ENCODE measurements at regions of chr3 and their contacts with region 1.

Region 1: DNA sequence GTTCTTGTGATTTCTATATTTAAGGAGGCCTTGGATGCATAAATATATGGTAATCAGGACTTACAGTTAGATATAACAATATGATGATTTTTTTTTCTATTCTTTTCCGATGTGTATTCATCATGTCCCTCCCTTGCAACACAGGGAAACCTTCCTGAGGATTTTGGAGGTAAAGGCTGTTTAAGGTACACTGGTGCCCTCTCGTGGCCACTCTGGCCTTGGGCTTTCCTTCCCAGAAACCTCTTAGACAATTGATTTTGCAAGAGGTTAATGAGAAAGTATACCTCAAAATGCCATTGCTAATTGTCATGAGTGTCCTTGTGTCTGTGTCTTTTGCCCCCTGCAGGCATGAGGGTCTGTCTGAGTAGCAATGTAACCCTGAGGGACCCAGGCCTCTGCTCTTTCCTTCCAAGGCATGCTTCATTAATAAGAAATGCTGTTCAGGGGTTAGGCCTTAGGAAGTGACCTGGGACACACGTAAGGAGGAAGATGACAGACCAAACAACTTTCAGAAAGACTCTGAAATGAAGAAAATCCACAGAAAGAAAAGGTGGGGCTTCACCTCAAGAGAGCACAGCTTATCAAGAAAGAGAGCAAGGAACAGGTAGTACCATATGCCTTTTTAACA is 70.3 kb upstream of the PPP2R3A start:
- DNase-seq: peak; percentile 29 to 65 (median 44)
- ATAC-seq: peak; percentile 72
- H3K4me3 ChIP-seq: no peak overlapping the region
- H3K27ac ChIP-seq: no peak overlapping the region
- H3K4me1 ChIP-seq: no peaks in the 10 kb centered on the region
- H3K27me3 ChIP-seq: no peaks in the 10 kb centered on the region
- CTCF ChIP-seq: peak; percentile 52 to 76 (median 74)
- EP300 ChIP-seq: no peak
- POLR2A ChIP-seq: no peak
- RAD21 ChIP-seq: peak; percentile 55 to 79

Region 2: GRCh38 chr3:135736740-135737139 is 158.5 kb before region 1 on chr3:
- CTCF ChIA-PET with region 1: no interaction called
- POLR2A ChIA-PET with region 1: no interaction called
- in situ Hi-C with region 1: no loop called
- intact Hi-C with region 1: loop called (anchors 1 kb)
- DNase-seq: peak in 3 of 4 experiments; percentile 10 to 39 (median 10)
- ATAC-seq: no peak
- H3K4me3 ChIP-seq: no peak overlapping the region
- H3K27ac ChIP-seq: no peak overlapping the region
- H3K4me1 ChIP-seq: no peaks in the 10 kb centered on the region
- H3K27me3 ChIP-seq: no peaks in the 10 kb centered on the region
- CTCF ChIP-seq: peak in 2 of 3 experiments; percentile 20 to 25; a peak in 1 of 6 replicates
- EP300 ChIP-seq: no peak
- POLR2A ChIP-seq: no peak
- RAD21 ChIP-seq: 0 out of 4 replicates have a peak, but pooled peaks of 1 of the 2 experiments have one; percentile 14

Region 3: GRCh38 chr3:136567599-136568188 is 672.5 kb after region 1 on chr3:
- CTCF ChIA-PET with region 1: no interaction called
- POLR2A ChIA-PET with region 1: no interaction called
- in situ Hi-C with region 1: no loop called
- intact Hi-C with region 1: no loop called
- DNase-seq: no peak
- ATAC-seq: no peak
- H3K4me3 ChIP-seq: no peak overlapping the region
- H3K27ac ChIP-seq: no peak overlapping the region
- H3K4me1 ChIP-seq: no peaks in the 10 kb centered on the region; a peak in 1 of 5 replicates
- H3K27me3 ChIP-seq: no peaks in the 10 kb centered on the region
- CTCF ChIP-seq: no peak
- EP300 ChIP-seq: no peak
- POLR2A ChIP-seq: no peak
- RAD21 ChIP-seq: no peak

Measured in K562 (cell line).